ENCODE measurements at regions of chr3 and their contacts with region 1.

Region 1: DNA sequence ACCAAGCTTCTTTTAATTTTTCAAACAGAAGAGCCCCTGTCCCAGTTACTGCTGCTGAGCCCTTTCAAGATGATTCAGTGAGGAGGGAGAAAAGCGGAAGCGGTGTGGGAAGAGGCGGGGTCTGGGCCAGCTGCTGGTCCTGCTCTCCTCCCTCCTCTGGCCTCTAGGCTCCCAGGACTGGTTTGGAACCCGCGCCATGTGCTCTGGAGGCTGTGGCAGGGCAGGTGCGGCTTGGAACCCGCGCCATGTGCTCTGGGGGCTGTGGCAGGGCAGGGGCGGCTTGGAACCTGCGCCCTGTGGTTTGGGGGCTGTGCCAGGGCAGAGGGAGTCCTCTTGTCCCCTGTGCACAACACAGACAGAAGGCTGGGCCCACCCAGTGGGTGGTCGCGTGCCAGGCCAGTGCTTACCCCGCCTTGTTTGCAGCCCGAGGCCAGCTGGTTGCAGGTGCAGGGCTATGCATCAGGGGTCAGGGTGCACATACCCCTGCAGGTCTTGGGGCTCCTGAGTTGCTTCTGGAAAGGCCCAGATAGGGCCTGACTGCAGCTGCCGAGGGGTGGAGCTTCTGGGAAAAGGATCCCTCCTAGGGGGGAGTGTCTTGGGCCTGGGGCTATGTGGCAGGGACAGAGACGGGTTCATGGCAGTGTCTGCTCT is 12.2 kb downstream of the ALG1L2 start:
- DNase-seq: peak; percentile 69
- H3K4me3 Mint-ChIP-seq: peak overlapping the region; percentile 34
- H3K27ac Mint-ChIP-seq: peak overlapping the region; percentile 57
- H3K4me1 Mint-ChIP-seq: peaks cover 25% of the 10 kb centered on the region
- H3K27me3 Mint-ChIP-seq: peaks cover 1% of the 10 kb centered on the region

Region 2: DNA sequence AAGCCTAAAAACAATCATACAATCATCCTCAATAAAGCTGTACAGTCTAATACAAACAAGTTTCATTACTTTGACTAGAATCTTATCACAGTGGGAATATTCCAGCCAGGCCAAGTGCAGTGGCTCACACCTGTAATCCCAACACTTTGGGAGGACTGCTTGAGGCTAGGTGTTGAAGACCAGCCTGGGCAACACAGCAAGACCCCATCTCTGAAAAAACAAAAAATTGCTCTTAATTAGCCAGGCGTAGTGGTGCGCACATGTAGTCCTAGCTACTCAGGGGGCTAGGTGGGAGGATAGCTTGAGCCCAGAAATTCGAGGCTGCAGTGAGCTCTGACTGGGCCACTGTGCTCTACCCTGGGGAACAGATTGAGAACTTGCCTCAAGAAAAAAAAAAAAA is 1446.6 kb before region 1 on chr3:
- CTCF ChIA-PET with region 1: no interaction called
- POLR2A ChIA-PET with region 1: no interaction called
- intact Hi-C with region 1: no loop called
- DNase-seq: no peak
- H3K4me3 Mint-ChIP-seq: no peak overlapping the region
- H3K27ac Mint-ChIP-seq: no peak overlapping the region
- H3K4me1 Mint-ChIP-seq: peaks cover 35% of the 10 kb centered on the region
- H3K27me3 Mint-ChIP-seq: no peaks in the 10 kb centered on the region

Region 3: GRCh38 chr3:129942296-129942695 is 151.6 kb before region 1 on chr3:
- CTCF ChIA-PET with region 1: interaction called, 10 read pairs
- POLR2A ChIA-PET with region 1: no interaction called
- intact Hi-C with region 1: loop called (anchors 10 kb)
- DNase-seq: peak; percentile 53
- H3K4me3 Mint-ChIP-seq: no peak overlapping the region
- H3K27ac Mint-ChIP-seq: no peak overlapping the region
- H3K4me1 Mint-ChIP-seq: no peaks in the 10 kb centered on the region
- H3K27me3 Mint-ChIP-seq: peaks cover 3% of the 10 kb centered on the region